ENCODE measurements at regions of chr2 and their contacts with region 1.

Region 1: GRCh38 chr2:155062250-155062921 is 363.9 kb downstream of the KCNJ3 start:
- DNase-seq: no peak
- H3K4me3 ChIP-seq: no peak overlapping the region
- H3K27ac ChIP-seq: no peak overlapping the region
- H3K4me1 ChIP-seq: no peaks in the 10 kb centered on the region
- H3K27me3 ChIP-seq: no peaks in the 10 kb centered on the region
- CTCF ChIP-seq: no peak
- EP300 ChIP-seq: no peak
- POLR2A ChIP-seq: no peak

Region 2: GRCh38 chr2:155043677-155044076 is 18.7 kb before region 1 on chr2:
- in situ Hi-C with region 1: no loop called
- intact Hi-C with region 1: loop called (anchors 1 kb)
- DNase-seq: no peak
- H3K4me3 ChIP-seq: no peak overlapping the region
- H3K27ac ChIP-seq: no peak overlapping the region
- H3K4me1 ChIP-seq: no peaks in the 10 kb centered on the region
- H3K27me3 ChIP-seq: no peaks in the 10 kb centered on the region
- CTCF ChIP-seq: no peak
- EP300 ChIP-seq: no peak
- POLR2A ChIP-seq: no peak